ENCODE measurements at regions of chr1 and their contacts with region 1.

Region 1: DNA sequence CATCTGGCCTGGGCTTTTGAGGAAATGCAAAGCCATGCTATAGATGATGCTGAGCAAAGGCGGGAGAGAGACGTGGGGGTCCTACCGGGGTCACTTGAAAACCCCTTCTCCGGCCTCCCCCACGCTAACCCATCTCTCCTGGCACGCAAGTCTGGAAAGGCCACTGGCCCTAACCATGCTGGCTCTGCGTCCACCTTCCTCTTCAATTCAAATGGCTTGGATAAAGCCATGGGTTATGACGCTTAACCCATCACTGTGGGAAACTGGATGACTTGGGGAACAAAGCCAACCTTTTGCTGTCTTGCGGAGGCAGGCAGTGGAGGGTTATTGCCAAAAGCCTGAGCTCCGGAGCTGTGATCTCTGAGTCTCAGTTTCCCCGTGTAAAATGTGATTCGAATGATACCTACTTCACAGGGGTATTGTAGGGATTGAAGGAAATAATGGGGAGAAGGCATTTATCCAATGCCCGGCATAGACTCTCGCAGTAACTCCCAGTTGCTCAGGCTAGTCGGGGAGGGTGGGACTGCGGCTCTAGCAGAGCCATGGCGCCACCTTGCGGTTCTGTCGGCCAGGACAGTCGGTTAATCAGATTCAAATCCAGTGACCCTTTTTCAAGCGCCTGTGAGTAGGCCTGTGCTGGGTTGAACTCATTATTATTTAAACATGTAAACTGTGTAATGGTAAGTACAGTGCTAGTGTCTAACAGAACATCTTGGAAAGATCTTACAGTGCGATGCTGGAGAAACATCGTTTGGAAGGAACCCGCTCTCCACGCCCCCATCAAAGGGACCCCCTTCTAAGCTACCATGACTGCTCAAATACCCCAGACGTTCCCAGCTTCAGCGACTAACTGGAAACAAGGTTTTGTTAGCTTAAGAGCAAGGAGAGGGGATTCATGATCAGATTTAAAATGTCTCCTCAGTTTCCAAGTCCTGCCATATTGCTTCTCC is 20.3 kb downstream of the NEK2 start:
- DNase-seq: peak; percentile 90
- H3K4me3 ChIP-seq: no peak overlapping the region
- H3K27ac ChIP-seq: no peak overlapping the region
- H3K4me1 ChIP-seq: peaks cover 0 to 4% (median 0%) of the 10 kb centered on the region in 4 donors
- H3K27me3 ChIP-seq: no peaks in the 10 kb centered on the region
- CTCF ChIP-seq: peak; percentile 91 to 96 (median 93)
- EP300 ChIP-seq: no peak
- POLR2A ChIP-seq: no peak

Region 2: GRCh38 chr1:210400043-210400840 is 1254.9 kb before region 1 on chr1:
- in situ Hi-C with region 1: loop called in 1 of 4 experiments (anchors 25 kb)
- intact Hi-C with region 1: no loop called
- DNase-seq: peak; percentile 38
- H3K4me3 ChIP-seq: no peak overlapping the region
- H3K27ac ChIP-seq: no peak overlapping the region
- H3K4me1 ChIP-seq: no peaks in the 10 kb centered on the region
- H3K27me3 ChIP-seq: no peaks in the 10 kb centered on the region
- CTCF ChIP-seq: peak; percentile 65 to 77 (median 73)
- EP300 ChIP-seq: no peak
- POLR2A ChIP-seq: no peak

Region 3: DNA sequence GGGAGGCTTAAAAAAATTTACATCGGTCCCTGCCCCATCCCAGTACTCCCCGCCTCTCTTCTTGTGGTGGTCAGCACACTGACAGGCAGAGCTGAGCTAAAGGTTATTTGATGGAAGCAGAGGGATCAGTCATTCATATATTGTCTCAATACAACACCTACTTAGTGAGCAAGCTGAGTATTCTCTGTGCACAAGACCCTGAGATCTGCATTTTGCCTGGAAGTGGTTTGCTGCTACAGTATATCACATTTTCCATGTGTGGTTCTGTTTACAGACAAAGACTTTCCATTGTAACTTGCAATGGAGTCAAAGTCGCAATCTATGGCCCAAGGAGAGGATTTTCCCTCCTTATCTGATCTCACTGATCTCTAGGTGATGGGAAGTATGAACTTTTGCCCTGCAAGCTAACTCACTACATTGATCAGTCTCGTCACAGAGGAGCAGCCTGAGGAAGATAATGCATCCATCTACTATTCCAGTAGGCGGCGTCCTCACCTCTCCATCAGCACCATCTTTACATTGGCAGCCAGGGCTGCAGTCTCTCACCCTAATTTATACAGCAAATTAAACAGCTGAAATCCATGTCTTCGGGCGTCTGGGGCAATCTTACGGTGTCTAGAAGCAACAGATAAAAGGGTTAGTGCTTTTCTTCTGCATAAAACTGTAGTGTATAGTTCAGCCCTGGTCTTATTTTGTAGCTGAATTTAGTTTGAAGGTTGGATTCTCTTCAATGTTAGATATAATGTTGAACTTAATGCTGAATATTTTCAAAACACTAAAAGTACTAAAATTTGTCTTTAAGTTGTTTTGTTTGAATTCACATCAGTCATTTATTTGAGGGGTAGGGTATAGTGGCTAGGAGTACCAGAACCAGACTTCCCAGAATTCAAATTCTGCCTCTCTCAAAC is 331.7 kb before region 1 on chr1:
- in situ Hi-C with region 1: loop called in 3 of 4 experiments (anchors 10 kb)
- intact Hi-C with region 1: no loop called
- DNase-seq: peak; percentile 68
- H3K4me3 ChIP-seq: no peak overlapping the region
- H3K27ac ChIP-seq: no peak overlapping the region
- H3K4me1 ChIP-seq: peaks cover 0 to 21% (median 18%) of the 10 kb centered on the region in 4 donors
- H3K27me3 ChIP-seq: no peaks in the 10 kb centered on the region
- CTCF ChIP-seq: peak; percentile 74 to 83 (median 81)
- EP300 ChIP-seq: no peak
- POLR2A ChIP-seq: no peak

Region 4: DNA sequence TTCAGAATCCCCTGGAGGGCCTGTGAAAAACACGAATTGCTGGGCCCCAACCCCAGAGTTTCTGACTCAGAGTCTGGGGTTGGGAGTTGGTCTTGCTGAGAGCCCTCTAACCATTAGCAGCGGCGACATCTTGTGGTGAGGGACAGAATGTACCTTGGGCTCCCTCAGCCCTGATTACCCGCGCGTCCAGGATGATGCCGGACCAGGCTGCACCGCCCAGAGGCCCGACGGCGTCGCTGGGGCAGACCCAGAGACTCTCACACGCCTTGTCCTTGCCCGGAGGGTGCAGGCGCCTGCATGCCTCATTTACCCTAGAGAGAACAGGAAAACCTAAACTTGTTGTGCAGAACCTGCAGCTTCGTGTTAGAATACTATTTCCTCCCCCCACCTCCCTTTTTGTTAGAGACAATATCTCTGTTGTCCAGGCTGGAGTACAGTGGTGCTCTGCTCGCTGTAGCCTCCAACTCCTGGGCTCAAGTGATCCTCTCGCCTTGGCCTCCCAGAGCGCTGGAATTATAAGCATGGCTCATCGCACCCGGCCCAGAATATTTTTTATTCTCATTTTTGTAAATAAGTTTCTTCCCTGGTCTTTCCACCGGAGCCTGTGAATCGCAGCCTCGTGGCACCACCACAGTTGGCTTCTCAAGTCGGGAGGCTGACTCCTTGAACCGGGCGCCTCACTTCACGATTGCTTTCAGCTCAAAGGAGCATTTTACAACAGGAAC is 140.9 kb before region 1 on chr1:
- in situ Hi-C with region 1: loop called in 3 of 4 experiments (anchors 10 to 25 kb)
- intact Hi-C with region 1: loop called (anchors 5 kb)
- DNase-seq: peak; percentile 89
- H3K4me3 ChIP-seq: no peak overlapping the region
- H3K27ac ChIP-seq: peak overlapping the region; percentile 83 to 88 (median 85)
- H3K4me1 ChIP-seq: peaks cover 7 to 31% (median 26%) of the 10 kb centered on the region in 4 donors
- H3K27me3 ChIP-seq: no peaks in the 10 kb centered on the region
- CTCF ChIP-seq: peak; percentile 70 to 84 (median 73)
- EP300 ChIP-seq: no peak
- POLR2A ChIP-seq: no peak

Region 5: DNA sequence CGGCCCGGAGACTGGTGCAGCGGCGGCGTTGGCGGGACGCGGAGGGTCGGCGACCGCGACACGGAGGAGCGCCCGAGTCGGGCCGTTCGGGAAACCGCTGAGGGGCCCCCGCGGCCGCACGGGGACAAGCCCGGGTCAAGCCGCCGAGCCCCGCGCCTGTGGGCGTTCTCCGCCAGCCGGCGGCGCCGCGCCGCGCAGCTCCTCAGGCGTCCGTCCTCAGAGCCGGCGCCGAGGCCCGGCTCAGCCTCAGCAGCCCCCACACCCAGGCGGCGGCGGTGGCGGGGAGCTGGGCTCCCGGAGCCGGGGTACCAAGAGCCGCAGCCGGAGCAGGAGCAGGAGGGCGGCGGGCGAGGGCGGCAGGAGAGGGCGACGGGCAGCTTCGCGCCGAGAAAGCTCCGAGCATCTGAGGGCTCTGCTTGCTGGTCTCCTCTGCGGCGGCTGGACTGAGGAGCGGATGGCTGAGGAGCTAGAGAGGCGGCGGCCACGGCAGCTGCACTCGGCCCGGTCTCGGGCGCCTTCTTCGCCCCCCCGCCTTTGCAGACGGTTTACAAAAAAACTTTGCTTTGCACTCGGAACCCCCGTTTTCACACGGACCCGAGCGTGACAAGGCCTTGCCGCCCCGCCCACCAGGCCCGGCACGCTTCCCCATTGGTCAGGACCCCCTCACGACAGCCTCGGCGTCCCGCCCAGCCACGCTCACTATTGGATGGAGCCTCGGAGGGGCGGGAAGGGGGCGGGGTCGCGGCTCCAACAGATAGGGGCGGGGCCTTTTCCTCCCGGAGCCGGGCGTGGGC is 76.3 kb before region 1 on chr1 and contains the start of gene SLC30A1:
- in situ Hi-C with region 1: loop called in 2 of 4 experiments (anchors 10 kb)
- intact Hi-C with region 1: loop called (anchors 2 kb)
- DNase-seq: peak; percentile 100
- H3K4me3 ChIP-seq: peak within 1 kb of the TSS; percentile 54 to 93 (median 88)
- H3K27ac ChIP-seq: peak within 1 kb of the TSS; percentile 94 to 99 (median 98)
- H3K4me1 ChIP-seq: peaks cover 23 to 61% (median 30%) of the 10 kb centered on the region in 4 donors
- H3K27me3 ChIP-seq: no peaks in the 10 kb centered on the region
- CTCF ChIP-seq: no peak
- EP300 ChIP-seq: no peak
- POLR2A ChIP-seq: peak; percentile 97
- total RNA-seq, gene SLC30A1: 14.5 to 42.3 (median 26.0) TPM